ENCODE measurements at regions of chr4 and their contacts with region 1.

Region 1: DNA sequence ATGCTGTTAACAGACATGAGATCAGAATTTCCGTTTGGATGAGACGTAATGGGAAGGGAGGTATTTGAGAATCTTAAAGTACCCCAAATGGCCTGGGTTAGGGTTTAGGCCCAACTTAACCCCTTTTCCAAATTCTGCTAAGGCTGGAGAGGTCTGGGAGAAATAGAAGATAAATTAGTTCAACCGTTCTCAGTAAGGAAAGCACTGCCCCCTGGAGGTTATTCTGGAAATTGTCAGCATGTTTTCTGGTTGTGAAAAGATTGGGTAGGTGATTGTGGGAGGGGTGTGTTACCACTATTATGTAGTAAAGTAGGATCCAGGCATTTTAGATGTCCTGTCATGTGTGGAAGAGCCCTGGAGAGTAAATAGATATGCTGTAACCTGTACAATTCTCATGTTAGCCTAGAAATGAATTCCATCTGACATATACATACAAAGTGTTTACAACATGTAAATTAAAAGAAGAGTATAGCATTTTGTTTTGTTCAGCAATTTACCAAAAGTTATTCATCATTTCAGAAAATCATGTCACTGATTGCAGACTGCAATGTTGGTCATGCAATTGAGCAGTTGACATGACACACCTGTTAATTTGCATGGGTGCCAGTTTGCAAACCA is 26.8 kb upstream of the GRXCR1 start:
- DNase-seq: peak in 1 of 3 donors; percentile 54
- ATAC-seq: peak; percentile 78 to 84 (median 82)
- H3K4me3 ChIP-seq: no peak overlapping the region
- H3K27ac ChIP-seq: no peak overlapping the region
- H3K4me1 ChIP-seq: no peaks in the 10 kb centered on the region
- H3K27me3 ChIP-seq: peaks cover 0 to 14% of the 10 kb centered on the region in 2 donors
- CTCF ChIP-seq: peak; percentile 73 to 85 (median 78)
- POLR2A ChIP-seq: no peak

Region 2: DNA sequence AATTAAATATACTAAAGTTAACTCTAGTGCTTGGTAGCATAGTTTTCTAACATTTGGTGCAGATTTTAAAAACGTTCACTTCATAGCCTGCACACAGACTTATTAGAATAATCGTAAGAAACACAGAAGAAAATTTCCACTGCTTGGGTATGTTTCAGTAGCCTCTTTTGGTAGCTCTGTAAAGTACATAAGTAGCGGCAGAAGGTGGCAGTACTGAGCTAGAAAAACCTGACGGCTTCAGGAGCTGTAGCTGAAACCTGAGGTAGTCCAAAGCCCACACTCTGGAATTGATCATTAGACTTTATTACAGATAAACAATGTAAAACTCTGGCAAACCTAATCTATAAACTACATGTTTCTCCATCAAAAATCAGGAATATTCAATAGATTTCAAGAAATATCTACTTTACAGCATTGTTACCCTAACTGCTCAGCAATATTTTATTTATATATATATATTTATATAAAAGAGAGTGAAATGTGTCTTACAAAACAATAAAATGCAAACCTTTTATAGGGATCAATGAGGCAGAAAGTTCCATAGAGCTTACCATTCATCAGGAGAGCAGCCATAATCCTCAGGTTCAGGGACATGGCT is 297.0 kb before region 1 on chr4:
- intact Hi-C with region 1: loop called (anchors 5 to 10 kb)
- DNase-seq: peak in 1 of 3 donors; percentile 62
- ATAC-seq: peak; percentile 96 to 97 (median 96)
- H3K4me3 ChIP-seq: no peak overlapping the region
- H3K27ac ChIP-seq: no peak overlapping the region
- H3K4me1 ChIP-seq: no peaks in the 10 kb centered on the region
- H3K27me3 ChIP-seq: no peaks in the 10 kb centered on the region
- CTCF ChIP-seq: peak; percentile 62 to 78 (median 72)
- POLR2A ChIP-seq: no peak

Measured in right lobe of liver (tissue), 6 donors.